H1 (cell line): ENCODE measurements at regions of chr10 and their contacts with region 1.

Region 1: GRCh38 chr10:100046021-100046486 is 35.6 kb downstream of the CPN1 start:
- DNase-seq: peak; percentile 79 to 96
- H3K4me3 ChIP-seq: no peak overlapping the region
- H3K27ac ChIP-seq: no peak overlapping the region
- H3K4me1 ChIP-seq: peaks cover 0 to 3% (median under 1%) of the 10 kb centered on the region in 4 experiments; a peak in 1 of 7 replicates
- H3K27me3 ChIP-seq: no peaks in the 10 kb centered on the region
- CTCF ChIP-seq: peak; percentile 88 to 94 (median 89)
- EP300 ChIP-seq: no peak
- POLR2A ChIP-seq: no peak
- RAD21 ChIP-seq: peak; percentile 84 to 90

Region 2: GRCh38 chr10:99854860-99855259 is 191.2 kb before region 1 on chr10:
- CTCF ChIA-PET with region 1: interaction called, 17 read pairs
- POLR2A ChIA-PET with region 1: no interaction called
- DNase-seq: no peak
- H3K4me3 ChIP-seq: no peak overlapping the region
- H3K27ac ChIP-seq: no peak overlapping the region
- H3K4me1 ChIP-seq: peaks cover 4 to 11% (median 9%) of the 10 kb centered on the region in 4 experiments; a peak in 6 of 7 replicates
- H3K27me3 ChIP-seq: no peaks in the 10 kb centered on the region
- CTCF ChIP-seq: peak; percentile 29 to 52 (median 41)
- EP300 ChIP-seq: no peak
- POLR2A ChIP-seq: no peak
- RAD21 ChIP-seq: peak; percentile 56 to 65

Region 3: GRCh38 chr10:99917963-99918825 is 127.9 kb before region 1 on chr10:
- CTCF ChIA-PET with region 1: interaction called, 43 read pairs
- POLR2A ChIA-PET with region 1: interaction called, 19 read pairs
- DNase-seq: peak; percentile 34 to 75
- H3K4me3 ChIP-seq: peak overlapping the region; percentile 45 to 67 (median 50)
- H3K27ac ChIP-seq: peak overlapping the region; percentile 94
- H3K4me1 ChIP-seq: peaks cover 4 to 12% (median 9%) of the 10 kb centered on the region in 4 experiments; a peak in 6 of 7 replicates
- H3K27me3 ChIP-seq: no peaks in the 10 kb centered on the region
- CTCF ChIP-seq: no peak
- EP300 ChIP-seq: peak in 1 of 2 experiments; percentile 56; a peak in 1 of 3 replicates
- POLR2A ChIP-seq: peak in 1 of 2 experiments; percentile 76; a peak in 1 of 3 replicates
- RAD21 ChIP-seq: 0 out of 4 replicates have a peak, but pooled peaks of 1 of the 2 experiments have one; percentile 13

Region 4: DNA sequence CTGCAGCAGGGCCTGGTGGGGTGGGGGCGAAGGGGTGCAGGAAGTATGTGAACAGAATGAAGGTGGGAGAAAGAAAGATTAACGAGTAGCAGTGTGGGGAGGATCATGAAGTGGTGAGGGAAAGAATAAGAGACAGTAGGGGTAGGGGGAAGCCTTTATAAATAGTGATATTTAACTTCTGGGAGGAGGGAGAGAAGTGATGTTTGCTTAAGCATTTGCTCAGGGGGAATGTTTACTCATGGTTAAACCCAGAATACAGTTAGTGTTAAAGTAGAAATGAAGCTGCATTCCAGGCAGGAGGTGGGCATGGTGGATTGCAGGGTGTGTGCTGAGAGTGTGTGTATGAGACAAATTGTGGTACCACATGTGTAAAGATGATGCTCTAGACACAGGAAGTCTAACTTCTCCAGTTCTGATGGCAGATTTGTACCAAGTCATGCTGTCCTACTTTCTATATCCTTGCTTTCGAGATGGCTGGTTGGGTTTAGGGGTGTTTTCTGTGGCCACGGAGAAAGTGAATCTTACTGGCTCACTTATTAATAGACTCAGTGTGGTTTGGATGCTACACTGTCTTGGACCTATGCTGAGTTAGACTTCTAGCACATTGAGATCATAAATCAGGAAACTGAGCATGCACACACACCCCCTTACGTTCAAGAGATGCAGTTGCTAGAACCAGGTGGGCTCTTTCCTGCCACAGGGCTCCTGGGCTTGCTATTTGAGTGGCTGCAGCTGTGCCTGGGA is 25.7 kb before region 1 on chr10:
- CTCF ChIA-PET with region 1: interaction called, 37 read pairs
- POLR2A ChIA-PET with region 1: no interaction called
- DNase-seq: no peak
- H3K4me3 ChIP-seq: no peak overlapping the region
- H3K27ac ChIP-seq: no peak overlapping the region
- H3K4me1 ChIP-seq: peaks cover 0 to 7% (median 1%) of the 10 kb centered on the region in 4 experiments; a peak in 5 of 7 replicates
- H3K27me3 ChIP-seq: no peaks in the 10 kb centered on the region
- CTCF ChIP-seq: no peak
- EP300 ChIP-seq: no peak
- POLR2A ChIP-seq: no peak
- RAD21 ChIP-seq: no peak

Region 5: GRCh38 chr10:100033766-100034418 is 12.2 kb before region 1 on chr10:
- CTCF ChIA-PET with region 1: interaction called, 17 read pairs
- POLR2A ChIA-PET with region 1: interaction called, 3 read pairs
- DNase-seq: no peak
- H3K4me3 ChIP-seq: no peak overlapping the region
- H3K27ac ChIP-seq: no peak overlapping the region
- H3K4me1 ChIP-seq: peaks cover 0 to 5% (median 3%) of the 10 kb centered on the region in 4 experiments; a peak in 4 of 7 replicates
- H3K27me3 ChIP-seq: no peaks in the 10 kb centered on the region
- CTCF ChIP-seq: no peak
- EP300 ChIP-seq: no peak
- POLR2A ChIP-seq: no peak
- RAD21 ChIP-seq: no peak

Region 6: GRCh38 chr10:100106865-100107264 is 60.8 kb after region 1 on chr10:
- CTCF ChIA-PET with region 1: no interaction called
- POLR2A ChIA-PET with region 1: no interaction called
- DNase-seq: no peak
- H3K4me3 ChIP-seq: no peak overlapping the region
- H3K27ac ChIP-seq: no peak overlapping the region
- H3K4me1 ChIP-seq: peaks cover 0 to under 1% (median 0%) of the 10 kb centered on the region in 4 experiments; a peak in 1 of 7 replicates
- H3K27me3 ChIP-seq: no peaks in the 10 kb centered on the region
- CTCF ChIP-seq: no peak
- EP300 ChIP-seq: no peak
- POLR2A ChIP-seq: no peak
- RAD21 ChIP-seq: no peak

Region 7: DNA sequence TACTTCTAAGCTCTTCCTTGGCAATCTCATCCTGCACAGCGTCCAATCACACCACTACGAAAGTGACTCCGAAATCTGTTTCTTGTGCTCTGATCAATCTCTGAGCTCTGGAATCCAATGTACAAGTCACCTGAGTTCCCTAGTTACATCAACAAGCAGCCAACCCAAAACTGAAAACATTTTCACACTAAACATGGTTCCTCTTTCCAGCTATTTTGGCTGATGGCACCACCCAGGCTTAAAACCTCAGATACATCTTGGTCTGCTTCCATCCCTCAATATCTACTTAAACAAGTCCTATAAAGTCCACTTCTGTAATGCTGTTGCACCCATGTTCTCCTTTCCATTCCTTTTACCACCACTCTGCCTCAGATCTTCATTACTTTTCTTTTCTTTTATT is 236.9 kb after region 1 on chr10:
- CTCF ChIA-PET with region 1: no interaction called
- POLR2A ChIA-PET with region 1: no interaction called
- DNase-seq: no peak
- H3K4me3 ChIP-seq: no peak overlapping the region
- H3K27ac ChIP-seq: no peak overlapping the region
- H3K4me1 ChIP-seq: peaks cover 0 to 8% (median 4%) of the 10 kb centered on the region in 4 experiments; a peak in 4 of 7 replicates
- H3K27me3 ChIP-seq: no peaks in the 10 kb centered on the region
- CTCF ChIP-seq: no peak
- EP300 ChIP-seq: no peak
- POLR2A ChIP-seq: no peak
- RAD21 ChIP-seq: no peak